Panc1 (cell line): ENCODE measurements at regions of chr1 and their contacts with region 1.

Region 1: GRCh38 chr1:210400043-210400840 is 71.5 kb downstream of the HHAT start:
- DNase-seq: peak; percentile 39
- ATAC-seq: peak; percentile 96
- H3K4me3 ChIP-seq: no peak overlapping the region
- H3K27ac ChIP-seq: no peak overlapping the region
- H3K4me1 ChIP-seq: no peaks in the 10 kb centered on the region
- H3K27me3 ChIP-seq: no peaks in the 10 kb centered on the region
- CTCF ChIP-seq: peak; percentile 86

Region 2: GRCh38 chr1:210143465-210144062 is 256.7 kb before region 1 on chr1:
- CTCF ChIA-PET with region 1: no interaction called
- POLR2A ChIA-PET with region 1: no interaction called
- in situ Hi-C with region 1: no loop called
- intact Hi-C with region 1: loop called (anchors 1 kb)
- DNase-seq: no peak
- ATAC-seq: no peak
- H3K4me3 ChIP-seq: no peak overlapping the region
- H3K27ac ChIP-seq: no peak overlapping the region
- H3K4me1 ChIP-seq: no peaks in the 10 kb centered on the region
- H3K27me3 ChIP-seq: no peaks in the 10 kb centered on the region
- CTCF ChIP-seq: peak; percentile 65; the same call in 1 of the 2 replicates

Region 3: GRCh38 chr1:210360852-210361477 is 39.3 kb before region 1 on chr1:
- CTCF ChIA-PET with region 1: interaction called, 4 read pairs
- POLR2A ChIA-PET with region 1: no interaction called
- in situ Hi-C with region 1: no loop called
- intact Hi-C with region 1: loop called (anchors 2 kb)
- DNase-seq: peak; percentile 15
- ATAC-seq: peak; percentile 93
- H3K4me3 ChIP-seq: no peak overlapping the region
- H3K27ac ChIP-seq: no peak overlapping the region
- H3K4me1 ChIP-seq: no peaks in the 10 kb centered on the region
- H3K27me3 ChIP-seq: no peaks in the 10 kb centered on the region
- CTCF ChIP-seq: peak; percentile 77

Region 4: GRCh38 chr1:210707300-210708240 is 307.3 kb after region 1 on chr1:
- CTCF ChIA-PET with region 1: no interaction called
- POLR2A ChIA-PET with region 1: no interaction called
- in situ Hi-C with region 1: no loop called
- intact Hi-C with region 1: no loop called
- DNase-seq: no peak
- ATAC-seq: no peak
- H3K4me3 ChIP-seq: no peak overlapping the region
- H3K27ac ChIP-seq: no peak overlapping the region
- H3K4me1 ChIP-seq: no peaks in the 10 kb centered on the region
- H3K27me3 ChIP-seq: no peaks in the 10 kb centered on the region; the same call in 1 of the 2 replicates
- CTCF ChIP-seq: no peak

Region 5: DNA sequence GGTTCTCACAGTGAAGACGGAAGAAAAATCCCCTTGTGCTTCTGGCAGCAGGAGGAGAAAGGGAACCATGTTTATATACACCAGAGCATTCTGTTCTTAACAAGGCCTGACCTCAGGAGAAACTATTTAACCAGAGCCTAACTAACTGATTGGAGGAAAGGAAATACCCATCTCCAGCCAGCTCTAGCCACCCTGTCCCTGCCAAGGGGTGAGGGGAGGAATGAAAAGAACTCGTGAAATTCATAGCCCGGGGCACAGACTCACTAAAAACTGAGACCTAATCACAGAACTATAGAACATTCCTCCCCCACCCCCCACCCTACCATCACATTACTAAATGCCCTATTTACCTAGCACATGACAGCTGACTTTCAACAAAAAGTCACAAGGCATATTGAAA is 668.7 kb after region 1 on chr1:
- CTCF ChIA-PET with region 1: interaction called, 11 read pairs
- POLR2A ChIA-PET with region 1: no interaction called
- in situ Hi-C with region 1: no loop called
- intact Hi-C with region 1: no loop called
- DNase-seq: no peak
- ATAC-seq: no peak
- H3K4me3 ChIP-seq: no peak overlapping the region
- H3K27ac ChIP-seq: no peak overlapping the region
- H3K4me1 ChIP-seq: no peaks in the 10 kb centered on the region
- H3K27me3 ChIP-seq: peaks cover 2% of the 10 kb centered on the region; the same call in 1 of the 2 replicates
- CTCF ChIP-seq: no peak